HepG2 (cell line): ENCODE measurements at regions of chr18 and their contacts with region 1.

Region 1: DNA sequence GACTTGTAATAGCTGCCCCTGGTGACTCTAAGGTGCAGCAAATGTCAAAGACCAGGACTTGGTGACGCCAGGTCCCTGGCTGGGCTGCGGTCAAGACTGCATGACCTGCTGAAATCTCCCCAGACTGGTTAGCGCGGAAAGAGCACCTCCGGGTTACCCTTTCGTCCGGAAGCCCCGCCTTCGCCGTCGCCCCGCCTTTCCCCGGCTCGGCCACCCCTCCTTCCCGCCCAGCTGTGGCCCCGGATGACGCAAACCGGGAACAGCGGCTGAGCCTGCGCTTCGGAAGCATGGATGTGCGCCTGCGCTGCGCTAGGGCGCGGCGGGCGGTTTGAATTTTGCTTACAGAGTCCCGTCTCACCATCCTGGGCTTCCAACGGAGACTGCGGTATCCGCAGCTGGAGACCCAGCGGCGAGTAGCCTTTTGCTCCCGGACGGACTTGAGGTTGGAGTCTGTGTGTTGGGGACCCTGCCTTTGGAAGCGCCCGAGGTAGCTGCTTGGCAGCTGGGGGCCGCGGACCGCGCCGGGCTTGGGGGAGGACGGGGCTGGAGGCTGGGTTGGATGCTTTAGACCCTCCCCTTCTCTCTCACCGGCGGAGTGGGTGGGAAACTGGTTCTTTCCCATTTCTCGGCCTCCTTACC is at the start of gene SKA1:
- DNase-seq: peak; percentile 87
- ATAC-seq: peak; percentile 96
- H3K4me3 ChIP-seq: peak within 1 kb of the TSS; percentile 75 to 88 (median 86)
- H3K27ac ChIP-seq: peak within 1 kb of the TSS; percentile 82
- H3K4me1 ChIP-seq: peaks cover 25% of the 10 kb centered on the region
- H3K27me3 ChIP-seq: no peaks in the 10 kb centered on the region; a peak in 1 of 5 replicates
- CTCF ChIP-seq: no peak
- EP300 ChIP-seq: no peak; a peak in 1 of 4 replicates
- POLR2A ChIP-seq: peak; percentile 95 to 99
- RAD21 ChIP-seq: 0 out of 2 replicates have a peak, but pooled peaks have one; percentile 13
- total RNA-seq, gene SKA1: 21.3 and 28.3 TPM in 2 replicates

Region 2: DNA sequence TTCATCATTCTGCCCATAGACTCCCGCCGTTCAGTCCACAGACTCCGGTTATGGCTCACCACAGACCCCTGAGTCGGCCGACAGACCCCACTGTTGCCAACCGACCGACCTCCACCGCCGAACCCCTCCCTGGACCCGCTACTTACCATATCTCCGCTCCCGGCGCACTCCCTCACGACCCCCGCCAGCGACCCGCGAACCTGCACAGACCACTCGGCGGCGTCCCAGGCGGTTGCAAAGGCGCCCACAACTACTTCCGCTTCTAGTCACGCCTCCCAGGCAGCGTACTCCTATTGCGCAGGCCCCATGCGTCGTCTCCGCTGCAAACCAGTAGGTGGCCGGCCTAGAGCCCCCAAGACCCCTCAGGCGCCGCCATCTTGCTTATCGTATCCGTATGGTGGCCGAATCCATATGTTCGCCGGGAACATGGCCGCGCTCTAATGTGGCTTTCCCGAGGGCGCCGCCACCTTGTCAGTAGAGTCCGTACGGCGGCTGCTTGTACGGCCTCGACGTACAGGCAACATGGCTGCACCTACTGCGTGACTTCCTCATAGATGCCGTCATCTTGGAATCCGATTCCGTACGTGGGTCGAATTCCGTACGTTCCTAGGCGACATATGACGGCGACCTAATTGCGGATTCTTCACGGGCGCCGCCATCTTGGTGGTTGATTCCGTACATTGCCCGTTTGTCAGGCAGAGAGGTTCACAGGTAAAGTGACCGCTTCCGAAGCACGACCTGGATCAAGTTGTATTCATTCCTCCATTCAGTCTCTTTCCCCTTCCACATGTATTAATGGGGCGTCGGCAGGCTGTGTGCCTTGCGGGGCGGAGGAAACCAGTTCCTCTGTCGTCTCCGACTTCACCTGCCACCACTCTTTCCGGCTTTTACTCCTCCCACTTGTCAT is 87.2 kb before region 1 on chr18 and contains the start of gene CXXC1:
- CTCF ChIA-PET with region 1: no interaction called
- POLR2A ChIA-PET with region 1: no interaction called
- in situ Hi-C with region 1: no loop called
- intact Hi-C with region 1: loop called (anchors 5 kb)
- DNase-seq: peak; percentile 98
- ATAC-seq: peak; percentile 96
- H3K4me3 ChIP-seq: peak within 1 kb of the TSS; percentile 88 to 93 (median 90)
- H3K27ac ChIP-seq: peak within 1 kb of the TSS; percentile 59
- H3K4me1 ChIP-seq: peaks cover 16% of the 10 kb centered on the region
- H3K27me3 ChIP-seq: peaks cover 0 to 4% of the 10 kb centered on the region in 2 experiments; a peak in 2 of 5 replicates
- CTCF ChIP-seq: peak; percentile 78
- EP300 ChIP-seq: no peak; a peak in 1 of 4 replicates
- POLR2A ChIP-seq: peak in 1 of 2 experiments; percentile 41; a peak in 2 of 4 replicates
- RAD21 ChIP-seq: peak; percentile 29; the same call in 1 of the 2 replicates
- total RNA-seq, gene CXXC1: 29.8 and 32.9 TPM in 2 replicates

Region 3: DNA sequence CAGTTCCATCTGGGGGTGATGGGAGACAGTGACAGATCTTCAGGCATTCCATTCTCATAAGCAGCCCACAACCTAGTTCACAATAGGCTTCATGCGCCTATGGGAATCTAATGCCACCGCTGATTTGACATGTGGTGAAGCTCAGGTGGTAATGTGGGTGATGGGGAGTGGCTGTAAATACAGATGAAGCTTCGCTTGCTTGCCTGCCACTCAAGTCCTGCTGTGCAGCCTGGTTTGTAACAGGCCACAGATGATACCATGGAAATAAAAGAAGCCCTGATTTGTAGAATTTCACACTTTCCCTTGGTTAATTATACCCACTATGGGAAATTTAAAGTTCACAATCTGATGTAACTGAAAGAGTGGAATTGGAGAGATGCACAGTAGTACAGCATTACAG is 46.9 kb before region 1 on chr18:
- CTCF ChIA-PET with region 1: no interaction called
- POLR2A ChIA-PET with region 1: no interaction called
- in situ Hi-C with region 1: no loop called
- intact Hi-C with region 1: no loop called
- DNase-seq: no peak
- ATAC-seq: no peak
- H3K4me3 ChIP-seq: no peak overlapping the region
- H3K27ac ChIP-seq: no peak overlapping the region
- H3K4me1 ChIP-seq: no peaks in the 10 kb centered on the region
- H3K27me3 ChIP-seq: no peaks in the 10 kb centered on the region; a peak in 2 of 5 replicates
- CTCF ChIP-seq: no peak
- EP300 ChIP-seq: no peak
- POLR2A ChIP-seq: no peak
- RAD21 ChIP-seq: no peak

Region 4: DNA sequence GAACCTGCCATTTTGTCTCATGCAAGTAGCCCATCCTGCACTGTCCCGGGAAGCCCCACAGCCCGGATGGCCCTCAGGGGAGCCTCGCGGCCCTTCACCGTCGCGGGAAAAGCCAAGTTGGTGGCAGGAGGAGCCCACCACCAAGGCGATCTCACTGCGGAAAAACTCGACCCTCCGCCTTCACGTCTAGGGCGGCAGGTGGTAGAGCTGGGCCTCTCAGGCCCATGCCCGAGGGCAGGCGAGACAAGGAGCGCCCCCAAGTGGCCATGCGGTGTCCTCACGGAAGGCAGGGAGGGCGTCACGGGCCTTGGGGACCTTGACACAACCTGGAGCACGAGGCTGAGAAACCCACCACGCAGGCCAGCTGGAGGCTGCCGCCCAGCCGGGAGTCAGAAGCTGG is 34.8 kb before region 1 on chr18:
- CTCF ChIA-PET with region 1: no interaction called
- POLR2A ChIA-PET with region 1: no interaction called
- in situ Hi-C with region 1: no loop called
- intact Hi-C with region 1: no loop called
- DNase-seq: no peak
- ATAC-seq: 0 out of 3 replicates have a peak, but pooled peaks have one; percentile 31
- H3K4me3 ChIP-seq: no peak overlapping the region
- H3K27ac ChIP-seq: no peak overlapping the region
- H3K4me1 ChIP-seq: no peaks in the 10 kb centered on the region
- H3K27me3 ChIP-seq: no peaks in the 10 kb centered on the region
- CTCF ChIP-seq: peak; percentile 41
- EP300 ChIP-seq: no peak
- POLR2A ChIP-seq: no peak
- RAD21 ChIP-seq: no peak

Region 5: GRCh38 chr18:50405582-50406271 is 30.9 kb after region 1 on chr18:
- CTCF ChIA-PET with region 1: no interaction called
- POLR2A ChIA-PET with region 1: interaction called, 3 read pairs
- in situ Hi-C with region 1: no loop called
- intact Hi-C with region 1: loop called (anchors 2 kb)
- DNase-seq: no peak
- ATAC-seq: no peak; the same call in 2 of the 3 replicates
- H3K4me3 ChIP-seq: no peak overlapping the region
- H3K27ac ChIP-seq: peak overlapping the region; percentile 60
- H3K4me1 ChIP-seq: peaks cover 87% of the 10 kb centered on the region
- H3K27me3 ChIP-seq: no peaks in the 10 kb centered on the region; a peak in 1 of 5 replicates
- CTCF ChIP-seq: no peak
- EP300 ChIP-seq: no peak
- POLR2A ChIP-seq: no peak
- RAD21 ChIP-seq: no peak

Region 6: GRCh38 chr18:50432915-50433314 is 58.0 kb after region 1 on chr18:
- CTCF ChIA-PET with region 1: no interaction called
- POLR2A ChIA-PET with region 1: no interaction called
- in situ Hi-C with region 1: no loop called
- intact Hi-C with region 1: no loop called
- DNase-seq: no peak
- ATAC-seq: no peak
- H3K4me3 ChIP-seq: no peak overlapping the region
- H3K27ac ChIP-seq: no peak overlapping the region
- H3K4me1 ChIP-seq: peaks cover 9% of the 10 kb centered on the region; the same call in 1 of the 2 replicates
- H3K27me3 ChIP-seq: no peaks in the 10 kb centered on the region
- CTCF ChIP-seq: no peak
- EP300 ChIP-seq: no peak
- POLR2A ChIP-seq: no peak
- RAD21 ChIP-seq: no peak